ENCODE measurements at regions of chr17 and their contacts with region 1.

Region 1: GRCh38 chr17:78360371-78361224 is 721 bp upstream of the SOCS3 start:
- DNase-seq: peak; percentile 95 to 97
- ATAC-seq: peak; percentile 65 to 84 (median 78)
- H3K4me3 ChIP-seq: peak overlapping the region; percentile 96
- H3K27ac ChIP-seq: peak overlapping the region; percentile 82
- H3K4me1 ChIP-seq: peaks cover 18% of the 10 kb centered on the region
- H3K27me3 ChIP-seq: no peaks in the 10 kb centered on the region
- CTCF ChIP-seq: peak; percentile 91

Region 2: DNA sequence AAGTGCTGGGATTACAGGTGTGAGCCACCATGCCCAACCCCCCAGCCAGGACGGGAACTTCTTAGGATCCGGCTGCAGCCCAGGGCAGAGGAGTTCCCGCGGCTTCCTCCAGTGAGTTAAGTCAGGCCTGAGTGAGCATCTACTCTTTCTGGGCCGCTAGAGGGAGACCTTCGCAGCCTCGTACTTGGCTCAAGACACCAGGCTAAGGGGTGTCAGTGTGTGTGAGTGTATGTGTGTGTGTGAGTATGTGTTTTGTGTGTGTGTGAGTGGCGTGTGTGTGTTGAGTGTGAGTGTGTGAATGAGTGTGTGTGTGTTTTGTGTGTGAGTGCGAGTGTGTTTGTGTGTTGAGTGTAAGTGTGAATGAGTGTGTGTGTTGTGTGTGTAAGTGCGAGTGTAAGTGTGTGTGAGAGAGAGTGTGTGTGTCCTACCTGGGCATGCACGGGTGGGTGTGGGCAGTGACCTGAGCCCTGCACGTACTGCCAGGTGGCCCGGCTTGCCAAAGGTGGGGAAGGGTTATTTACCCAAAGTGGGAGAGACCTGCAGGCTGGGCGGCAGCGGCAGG is 70.7 kb before region 1 on chr17:
- intact Hi-C with region 1: loop called in 1 of 2 experiments (anchors 5 kb)
- DNase-seq: peak; percentile 73 to 85
- ATAC-seq: peak; percentile 88 to 95 (median 90)
- H3K4me3 ChIP-seq: no peak overlapping the region
- H3K27ac ChIP-seq: no peak overlapping the region
- H3K4me1 ChIP-seq: peaks cover 9% of the 10 kb centered on the region
- H3K27me3 ChIP-seq: no peaks in the 10 kb centered on the region
- CTCF ChIP-seq: peak; percentile 64

Region 3: GRCh38 chr17:78397681-78398101 is 37.1 kb after region 1 on chr17:
- intact Hi-C with region 1: no loop called
- DNase-seq: peak; percentile 61 to 81
- ATAC-seq: peak; percentile 90 to 97 (median 92)
- H3K4me3 ChIP-seq: peak overlapping the region; percentile 0
- H3K27ac ChIP-seq: peak overlapping the region; percentile 97
- H3K4me1 ChIP-seq: peaks cover 52% of the 10 kb centered on the region
- H3K27me3 ChIP-seq: no peaks in the 10 kb centered on the region
- CTCF ChIP-seq: no peak